HepG2 (cell line): ENCODE measurements at regions of chr2 and their contacts with region 1.

Region 1: DNA sequence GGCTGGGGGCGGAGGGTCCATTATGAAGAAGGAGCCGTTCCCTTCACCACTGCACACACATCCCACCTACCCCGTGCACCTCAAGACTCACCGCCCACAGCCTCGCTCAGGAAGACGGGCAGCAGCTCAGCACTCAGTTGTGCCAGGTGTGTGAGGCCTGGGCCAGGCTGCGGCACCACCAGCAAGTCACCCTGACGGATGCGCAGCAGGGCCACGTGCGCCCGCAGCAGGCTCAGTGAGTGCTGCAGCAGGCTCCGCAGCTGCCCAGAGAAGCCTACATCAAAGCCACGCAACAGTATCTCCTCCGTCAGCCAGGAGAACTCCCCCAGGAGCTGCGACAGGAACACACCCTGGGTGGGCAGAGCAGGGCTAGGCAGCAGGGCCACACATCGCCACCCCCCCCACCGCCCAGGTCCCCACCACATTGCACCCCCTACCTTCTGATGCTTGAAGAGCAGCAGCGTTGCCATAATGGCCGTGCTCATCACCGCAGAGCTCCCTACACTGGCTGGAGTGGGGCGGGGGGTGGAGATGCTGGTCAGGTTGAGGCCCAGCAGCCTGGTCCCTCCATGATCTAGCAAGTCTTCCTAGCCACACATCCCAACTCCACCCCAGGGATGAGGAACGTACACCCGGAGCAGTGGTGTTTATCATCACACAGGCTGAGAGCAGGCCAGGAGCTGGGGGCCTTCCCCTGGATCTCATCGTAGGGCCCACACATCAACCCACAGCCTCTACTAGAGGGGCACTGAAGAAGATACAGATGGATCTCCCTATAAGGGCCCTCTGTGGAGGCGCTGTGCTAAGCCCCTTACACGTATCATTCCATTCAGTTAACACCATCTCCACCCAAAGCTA is 10.2 kb downstream of the GPAT2 start:
- DNase-seq: no peak
- ATAC-seq: no peak
- H3K4me3 ChIP-seq: no peak overlapping the region
- H3K27ac ChIP-seq: no peak overlapping the region
- H3K4me1 ChIP-seq: no peaks in the 10 kb centered on the region
- H3K27me3 ChIP-seq: peaks cover 0 to 1% of the 10 kb centered on the region in 2 experiments; a peak in 2 of 5 replicates
- CTCF ChIP-seq: no peak
- EP300 ChIP-seq: no peak
- POLR2A ChIP-seq: no peak
- RAD21 ChIP-seq: no peak

Region 2: GRCh38 chr2:96116879-96117697 is 92.5 kb after region 1 on chr2:
- CTCF ChIA-PET with region 1: interaction called, 13 read pairs
- POLR2A ChIA-PET with region 1: no interaction called
- in situ Hi-C with region 1: loop called (anchors 25 kb)
- intact Hi-C with region 1: loop called (anchors 10 kb)
- DNase-seq: no peak
- ATAC-seq: peak; percentile 85
- H3K4me3 ChIP-seq: peak overlapping the region; percentile 48 to 76 (median 53); a peak in 5 of 6 replicates
- H3K27ac ChIP-seq: no peak overlapping the region
- H3K4me1 ChIP-seq: 0 out of 2 replicates have a peak, but pooled peaks cover 5% of the 10 kb centered on the region
- H3K27me3 ChIP-seq: peaks cover 26 to 71% of the 10 kb centered on the region in 2 experiments
- CTCF ChIP-seq: peak; percentile 69
- EP300 ChIP-seq: no peak
- POLR2A ChIP-seq: no peak
- RAD21 ChIP-seq: peak; percentile 100

Region 3: DNA sequence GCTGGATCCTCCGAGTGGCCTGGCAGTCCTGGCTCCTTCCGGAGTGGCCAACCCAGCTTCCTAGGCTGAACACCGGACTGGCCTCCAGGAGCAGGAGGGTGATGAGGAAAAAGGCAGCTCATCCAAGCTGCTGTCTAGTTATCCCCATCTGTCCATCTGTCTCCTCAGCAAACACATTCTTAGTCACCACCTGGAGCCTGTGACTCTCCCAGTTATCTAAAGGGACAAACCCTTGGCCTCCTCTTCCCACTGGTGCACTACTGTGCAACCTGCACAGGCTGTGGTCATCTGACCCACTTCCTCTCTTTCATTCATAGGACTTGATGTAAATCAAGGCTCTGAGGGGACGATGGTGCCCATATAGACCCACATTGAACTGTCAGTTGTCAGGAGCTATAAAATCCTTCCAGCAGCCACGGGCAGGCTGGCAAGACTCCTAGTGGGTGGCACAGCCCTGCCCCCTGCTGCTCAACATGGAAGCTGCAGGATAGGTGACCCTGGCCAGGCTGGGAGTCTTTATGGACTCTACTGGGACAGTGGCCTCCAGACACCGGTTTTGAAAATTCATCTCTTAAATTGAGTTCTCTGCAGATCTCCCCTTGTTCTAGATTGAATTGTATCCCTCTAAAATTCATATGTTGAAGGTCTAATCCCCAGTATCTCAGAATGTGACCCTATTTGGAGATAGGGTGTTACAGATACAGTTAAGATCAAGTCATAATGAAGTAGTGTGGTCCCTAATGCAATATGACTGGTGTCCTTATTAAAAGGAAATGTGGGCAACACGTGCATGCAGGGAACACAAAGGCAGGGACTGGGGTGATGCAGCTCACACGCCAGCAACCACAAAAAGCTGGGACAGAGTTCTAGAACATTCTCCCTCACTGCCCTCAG is 149.9 kb after region 1 on chr2:
- CTCF ChIA-PET with region 1: interaction called, 12 read pairs
- POLR2A ChIA-PET with region 1: no interaction called
- in situ Hi-C with region 1: no loop called
- intact Hi-C with region 1: loop called (anchors 10 kb)
- DNase-seq: peak; percentile 71
- ATAC-seq: peak; percentile 95
- H3K4me3 ChIP-seq: no peak overlapping the region
- H3K27ac ChIP-seq: no peak overlapping the region
- H3K4me1 ChIP-seq: no peaks in the 10 kb centered on the region
- H3K27me3 ChIP-seq: peaks cover 0 to 9% of the 10 kb centered on the region in 2 experiments; a peak in 2 of 5 replicates
- CTCF ChIP-seq: peak; percentile 94
- EP300 ChIP-seq: no peak
- POLR2A ChIP-seq: no peak
- RAD21 ChIP-seq: peak; percentile 92

Region 4: DNA sequence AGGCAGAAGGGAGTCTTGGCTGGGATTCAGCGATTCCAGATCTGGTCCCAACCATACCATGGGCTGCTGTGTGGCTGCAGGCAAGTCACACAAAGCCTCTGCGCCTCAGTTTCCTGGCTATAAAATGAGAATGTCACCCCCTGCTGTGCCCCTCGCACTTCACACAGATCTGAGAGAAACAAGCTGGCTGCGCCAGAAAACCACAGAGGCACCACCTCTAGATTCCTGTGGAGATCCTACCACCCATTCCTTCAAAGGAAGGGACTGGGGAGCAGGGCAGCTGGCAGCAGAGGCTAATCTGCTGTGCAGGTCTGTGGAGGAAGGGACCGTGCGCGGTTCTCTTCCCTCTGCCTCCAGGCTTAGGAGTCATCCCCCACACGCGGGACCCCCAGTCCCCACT is 460.8 kb after region 1 on chr2:
- CTCF ChIA-PET with region 1: no interaction called
- POLR2A ChIA-PET with region 1: no interaction called
- in situ Hi-C with region 1: no loop called
- intact Hi-C with region 1: no loop called
- DNase-seq: no peak
- ATAC-seq: peak; percentile 43
- H3K4me3 ChIP-seq: peak overlapping the region in 2 of 3 experiments; percentile 61 to 65; a peak in 3 of 6 replicates
- H3K27ac ChIP-seq: no peak overlapping the region
- H3K4me1 ChIP-seq: peaks cover 17% of the 10 kb centered on the region
- H3K27me3 ChIP-seq: peaks cover 0 to 13% of the 10 kb centered on the region in 2 experiments; a peak in 2 of 5 replicates
- CTCF ChIP-seq: no peak
- EP300 ChIP-seq: no peak
- POLR2A ChIP-seq: no peak
- RAD21 ChIP-seq: no peak